ENCODE measurements at regions of chr20 and their contacts with region 1.

Region 1: DNA sequence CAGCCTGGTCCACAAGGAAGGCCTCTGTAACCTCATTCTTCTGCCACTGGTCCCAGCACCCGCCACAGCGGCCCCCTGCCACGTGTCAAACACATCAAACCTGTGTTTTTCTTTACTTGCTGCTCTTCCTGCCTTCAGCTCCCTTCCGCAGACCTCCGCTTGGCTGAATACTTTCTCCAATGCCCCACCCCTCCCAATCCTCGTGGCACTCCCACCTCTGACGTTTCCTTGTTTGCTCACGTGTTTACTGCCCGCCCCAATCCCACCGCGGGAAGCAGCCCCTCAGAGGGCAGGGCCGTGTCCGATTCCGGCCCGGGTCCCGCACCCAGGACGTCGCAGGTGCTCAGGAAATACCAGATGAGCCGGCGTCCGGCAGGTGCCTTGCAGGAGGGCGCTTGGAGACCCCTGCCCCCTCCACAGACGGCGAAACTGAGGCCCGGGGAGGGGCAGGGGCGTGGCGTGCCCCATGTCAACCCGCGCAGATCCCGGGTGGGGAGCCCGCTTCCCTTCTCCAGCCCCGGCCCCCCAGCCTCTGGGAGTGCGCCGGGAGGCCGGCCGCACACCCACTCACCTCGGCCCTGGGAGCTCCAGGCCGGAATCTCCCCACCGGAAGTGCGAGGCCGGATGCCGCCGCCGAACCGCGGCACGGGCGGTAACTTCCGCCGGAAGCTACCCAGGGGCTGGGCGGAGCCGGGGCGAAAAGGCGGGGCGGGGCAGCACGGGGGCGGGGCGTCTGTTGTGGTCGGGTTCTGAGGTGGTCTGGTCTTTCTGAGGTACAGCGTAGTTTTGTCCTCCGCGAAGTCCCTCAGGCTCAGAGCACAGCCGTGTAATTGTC is 42.4 kb downstream of the ELMO2 start:
- DNase-seq: peak; percentile 91
- ATAC-seq: peak; percentile 92 to 98 (median 96)
- H3K4me3 ChIP-seq: peak overlapping the region; percentile 77 to 100 (median 96)
- H3K27ac ChIP-seq: peak overlapping the region; percentile 91 to 100 (median 98)
- H3K4me1 ChIP-seq: peaks cover 10 to 67% (median 43%) of the 10 kb centered on the region in 9 donors
- H3K27me3 ChIP-seq: no peaks in the 10 kb centered on the region
- CTCF ChIP-seq: no peak

Region 2: GRCh38 chr20:46400828-46401477 is 36.9 kb after region 1 on chr20:
- intact Hi-C with region 1: loop called in 6 of 10 experiments (anchors 1 to 5 kb)
- DNase-seq: no peak
- ATAC-seq: peak in 2 of 8 donors; percentile 6 to 47
- H3K4me3 ChIP-seq: peak overlapping the region in 6 of 10 donors; percentile 0 to 26 (median 8)
- H3K27ac ChIP-seq: peak overlapping the region; percentile 42 to 81 (median 72)
- H3K4me1 ChIP-seq: peaks cover 34 to 89% (median 76%) of the 10 kb centered on the region in 9 donors
- H3K27me3 ChIP-seq: no peaks in the 10 kb centered on the region
- CTCF ChIP-seq: no peak

Region 3: DNA sequence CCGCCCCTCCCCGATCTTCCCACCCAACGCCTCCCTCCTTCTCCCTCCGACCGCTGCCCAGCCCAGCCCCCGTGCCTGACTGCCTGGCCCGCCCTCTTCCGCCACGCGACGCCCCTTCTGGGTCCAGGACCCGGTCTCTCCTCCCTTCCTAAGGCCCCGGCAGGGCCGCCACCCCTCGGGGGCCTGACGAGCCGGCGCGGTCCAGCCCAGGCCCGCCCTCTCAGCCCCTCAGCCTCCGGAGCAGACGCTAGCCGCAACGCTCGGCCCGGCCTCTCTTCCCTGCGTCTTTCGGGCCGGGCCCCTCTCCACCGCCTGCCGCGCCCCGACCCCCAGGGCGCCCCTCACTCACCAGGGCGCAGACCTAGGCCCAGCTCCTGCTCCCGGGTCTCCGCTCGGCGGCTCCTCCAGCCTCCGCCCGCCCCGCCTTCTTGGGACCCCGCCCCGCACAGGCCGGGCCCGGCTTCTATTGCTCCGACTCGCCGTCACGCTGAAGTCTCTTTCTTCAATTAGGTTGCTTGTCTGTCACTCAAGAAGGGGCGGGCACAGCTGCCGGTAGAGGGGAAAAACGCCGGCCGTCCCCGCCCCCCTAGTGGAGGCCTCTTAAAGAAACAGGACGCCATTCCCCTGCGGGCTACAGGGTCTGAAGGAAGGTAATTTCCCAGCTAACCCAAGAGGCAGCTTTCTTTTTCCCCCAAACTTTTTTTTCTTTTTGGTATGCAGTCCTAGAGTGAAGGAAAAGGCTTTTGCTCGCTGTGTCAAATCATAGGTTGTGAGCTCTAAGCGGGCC is 42.4 kb after region 1 on chr20 and contains the start of gene ELMO2:
- intact Hi-C with region 1: loop called in 6 of 10 experiments (anchors 1 to 5 kb)
- DNase-seq: peak; percentile 95 to 99
- ATAC-seq: peak; percentile 93 to 97 (median 95)
- H3K4me3 ChIP-seq: peak within 1 kb of the TSS; percentile 73 to 94 (median 89)
- H3K27ac ChIP-seq: peak within 1 kb of the TSS; percentile 90 to 98 (median 96)
- H3K4me1 ChIP-seq: peaks cover 18 to 63% (median 57%) of the 10 kb centered on the region in 9 donors
- H3K27me3 ChIP-seq: no peaks in the 10 kb centered on the region
- CTCF ChIP-seq: peak in 8 of 9 donors; percentile 8 to 52 (median 31)
- total RNA-seq, gene ELMO2: 23.6 to 46.0 (median 28.9) TPM

Region 4: GRCh38 chr20:46501337-46501942 is 137.4 kb after region 1 on chr20:
- intact Hi-C with region 1: no loop called
- DNase-seq: no peak
- ATAC-seq: no peak
- H3K4me3 ChIP-seq: no peak overlapping the region
- H3K27ac ChIP-seq: no peak overlapping the region
- H3K4me1 ChIP-seq: no peaks in the 10 kb centered on the region
- H3K27me3 ChIP-seq: no peaks in the 10 kb centered on the region
- CTCF ChIP-seq: no peak

Region 5: DNA sequence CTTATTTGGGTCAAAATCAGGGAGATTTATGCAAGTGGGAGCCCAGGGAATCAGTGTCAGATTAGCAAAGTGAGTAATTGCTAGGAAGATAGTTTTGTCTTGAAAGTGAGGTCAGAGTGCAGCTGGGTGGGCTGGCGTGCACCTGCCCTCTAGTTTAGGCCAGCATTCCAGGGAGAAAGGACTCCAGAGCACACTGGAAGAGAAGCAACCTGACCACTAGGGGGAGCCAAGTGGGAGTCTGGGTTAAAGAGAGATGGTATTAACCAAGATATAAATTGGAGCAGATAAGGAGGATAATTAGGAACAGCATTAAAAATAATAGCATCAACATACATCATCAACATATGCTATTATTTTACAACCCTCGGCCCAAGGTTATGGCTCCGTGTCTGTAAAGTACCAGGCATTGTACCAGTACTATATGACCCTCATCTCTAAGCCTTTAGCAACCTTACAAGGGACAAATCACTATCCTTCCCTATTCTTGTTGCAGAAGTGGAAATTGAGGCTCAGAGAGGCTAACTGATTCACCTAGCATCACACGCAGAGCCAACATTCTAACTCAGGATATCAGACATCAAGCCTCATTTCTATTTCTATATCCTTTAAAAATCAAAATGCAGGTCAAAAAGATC is 403.2 kb after region 1 on chr20:
- intact Hi-C with region 1: no loop called
- DNase-seq: no peak
- ATAC-seq: no peak
- H3K4me3 ChIP-seq: no peak overlapping the region
- H3K27ac ChIP-seq: no peak overlapping the region
- H3K4me1 ChIP-seq: no peaks in the 10 kb centered on the region
- H3K27me3 ChIP-seq: peaks cover 0 to 38% (median 0%) of the 10 kb centered on the region in 7 donors
- CTCF ChIP-seq: peak in 8 of 9 donors; percentile 16 to 69 (median 52)